HEK293 (cell line): ENCODE measurements at regions of chr22 and their contacts with region 1.

Region 1: DNA sequence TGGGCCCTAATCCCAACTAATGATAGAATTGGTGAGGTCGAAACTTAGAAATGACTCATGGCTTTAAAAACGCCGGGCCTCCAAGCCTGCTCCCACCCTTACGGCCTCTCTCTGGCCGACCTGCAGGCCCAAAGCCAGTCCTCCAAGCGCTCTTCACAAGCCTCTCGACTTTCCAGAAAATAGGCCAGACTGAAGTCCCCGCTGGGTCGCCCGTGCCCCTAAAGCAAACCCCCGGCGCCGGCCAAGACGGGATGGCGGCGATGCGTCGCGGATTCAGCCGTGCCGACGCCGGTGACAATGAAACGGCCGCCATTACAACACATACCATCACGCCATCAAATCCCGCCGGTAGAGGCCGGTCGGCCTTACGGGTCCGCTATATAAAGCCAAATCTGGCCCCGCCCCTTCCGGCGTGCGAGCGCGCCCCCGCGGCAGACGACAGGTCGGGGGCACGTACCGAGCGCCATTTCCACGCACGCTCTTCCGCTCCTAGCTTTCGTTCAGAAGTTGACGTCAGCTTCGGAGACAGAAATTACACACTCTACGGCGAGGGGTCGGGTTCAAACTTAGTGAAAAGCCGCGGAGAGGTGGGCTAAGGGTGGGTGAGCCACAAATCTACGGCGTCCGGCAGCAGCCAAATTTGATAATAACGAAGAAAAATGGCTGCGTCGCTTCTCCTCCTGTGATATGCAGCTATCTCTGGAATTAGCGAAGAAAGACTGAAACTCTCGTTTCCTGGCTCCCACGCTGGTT is at the start of gene RPL3:
- H3K4me3 ChIP-seq: peak within 1 kb of the TSS; percentile 73
- H3K27ac ChIP-seq: peak within 1 kb of the TSS; percentile 99
- H3K4me1 ChIP-seq: 0 out of 2 replicates have a peak, but pooled peaks cover 4% of the 10 kb centered on the region
- CTCF ChIP-seq: peak; percentile 86

Region 2: GRCh38 chr22:39135090-39135896 is 184.2 kb before region 1 on chr22:
- CTCF ChIA-PET with region 1: interaction called, 17 read pairs
- POLR2A ChIA-PET with region 1: interaction called, 9 read pairs
- H3K4me3 ChIP-seq: no peak overlapping the region
- H3K27ac ChIP-seq: no peak overlapping the region
- H3K4me1 ChIP-seq: no peaks in the 10 kb centered on the region
- CTCF ChIP-seq: peak; percentile 51

Region 3: DNA sequence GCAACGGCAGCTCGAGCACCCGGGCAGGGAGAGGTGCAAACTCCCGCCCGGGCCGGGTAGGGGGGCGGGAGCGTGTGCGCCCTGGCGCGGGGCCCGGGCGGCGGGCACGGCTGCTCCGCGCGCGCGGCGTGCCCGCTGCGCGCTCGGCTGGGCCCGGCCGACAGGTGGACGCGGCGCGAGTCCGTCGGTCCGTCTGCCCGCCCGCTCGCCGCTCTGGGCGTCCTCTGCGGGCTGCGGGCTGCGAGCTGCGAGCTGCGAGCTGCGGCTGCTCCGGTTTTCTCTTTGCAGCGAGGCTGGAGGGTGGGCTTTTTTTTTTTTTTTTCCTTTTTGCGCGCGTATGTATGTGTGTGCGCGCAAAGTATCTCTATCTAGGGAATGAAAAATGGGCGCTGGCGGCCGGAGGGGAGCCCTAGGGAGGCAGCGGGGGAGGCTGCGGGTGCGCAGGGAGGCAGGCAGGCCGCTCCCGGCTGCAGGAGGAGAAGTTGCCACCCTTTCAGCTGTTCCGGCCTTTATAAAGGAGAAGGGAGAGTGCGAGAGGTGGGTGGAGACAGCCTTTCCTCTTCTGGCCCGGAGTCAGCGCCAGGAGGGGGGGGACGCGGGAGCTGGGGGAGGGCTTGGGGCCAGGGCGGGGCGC is 74.8 kb before region 1 on chr22 and contains the start of gene PDGFB:
- CTCF ChIA-PET with region 1: interaction called, 5 read pairs
- POLR2A ChIA-PET with region 1: interaction called, 26 read pairs
- H3K4me3 ChIP-seq: peak within 1 kb of the TSS; percentile 54
- H3K27ac ChIP-seq: peak within 1 kb of the TSS; percentile 17; the same call in 1 of the 2 replicates
- H3K4me1 ChIP-seq: peaks cover 17% of the 10 kb centered on the region
- CTCF ChIP-seq: no peak

Region 4: GRCh38 chr22:39300186-39300830 is 19.1 kb before region 1 on chr22:
- CTCF ChIA-PET with region 1: interaction called, 15 read pairs
- POLR2A ChIA-PET with region 1: interaction called, 43 read pairs
- H3K4me3 ChIP-seq: no peak overlapping the region
- H3K27ac ChIP-seq: no peak overlapping the region
- H3K4me1 ChIP-seq: no peaks in the 10 kb centered on the region
- CTCF ChIP-seq: no peak

Region 5: GRCh38 chr22:39343259-39344048 is 24.0 kb after region 1 on chr22:
- CTCF ChIA-PET with region 1: interaction called, 9 read pairs
- POLR2A ChIA-PET with region 1: interaction called, 40 read pairs
- H3K4me3 ChIP-seq: no peak overlapping the region
- H3K27ac ChIP-seq: no peak overlapping the region
- H3K4me1 ChIP-seq: no peaks in the 10 kb centered on the region
- CTCF ChIP-seq: peak; percentile 63

Region 6: DNA sequence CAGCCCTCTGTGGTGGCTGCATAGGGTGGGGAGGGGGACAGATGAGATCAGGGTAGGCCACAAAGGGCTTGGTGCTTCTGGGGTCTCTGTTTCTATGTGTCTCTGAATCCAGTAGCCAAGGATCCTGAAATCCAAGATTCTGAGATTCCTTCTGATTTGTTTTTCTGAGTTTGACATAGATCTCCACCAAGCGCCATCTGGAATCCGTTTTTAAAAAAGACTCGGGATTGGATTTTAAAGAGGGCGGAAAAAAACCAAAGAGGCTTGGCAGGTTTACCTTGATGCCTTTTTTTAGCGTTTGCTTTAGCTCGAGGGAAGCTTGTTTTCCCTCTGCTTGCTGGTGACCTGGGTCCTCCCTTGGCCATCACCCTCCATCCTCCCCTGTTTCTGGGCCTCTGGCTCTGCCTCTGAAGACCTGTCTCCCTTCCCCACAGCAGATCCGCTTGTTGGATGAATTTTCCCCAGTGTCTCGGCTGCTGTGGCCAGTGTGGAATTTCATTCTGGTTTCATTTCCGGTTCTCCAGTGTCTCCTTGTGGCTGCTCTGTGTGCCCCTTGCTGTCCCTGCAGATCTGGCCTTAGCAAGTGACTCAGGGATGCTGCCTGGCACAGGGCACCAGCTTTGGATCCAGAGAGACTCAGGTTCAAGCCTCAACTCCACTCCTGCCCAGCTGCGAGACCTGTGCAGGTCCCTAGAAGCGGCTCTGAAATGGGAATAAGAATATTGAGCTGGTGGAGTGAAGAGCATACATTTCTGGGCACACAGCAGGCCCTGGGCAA is 45.5 kb after region 1 on chr22:
- CTCF ChIA-PET with region 1: interaction called, 3 read pairs
- POLR2A ChIA-PET with region 1: interaction called, 16 read pairs
- H3K4me3 ChIP-seq: no peak overlapping the region
- H3K27ac ChIP-seq: no peak overlapping the region
- H3K4me1 ChIP-seq: no peaks in the 10 kb centered on the region; the same call in 1 of the 2 replicates
- CTCF ChIP-seq: no peak

Region 7: GRCh38 chr22:39520054-39520891 is 200.8 kb after region 1 on chr22 and contains the start of gene ATF4:
- CTCF ChIA-PET with region 1: interaction called, 6 read pairs
- POLR2A ChIA-PET with region 1: interaction called, 62 read pairs
- H3K4me3 ChIP-seq: peak within 1 kb of the TSS; percentile 95
- H3K27ac ChIP-seq: peak within 1 kb of the TSS; percentile 95
- H3K4me1 ChIP-seq: 0 out of 2 replicates have a peak, but pooled peaks cover 5% of the 10 kb centered on the region
- CTCF ChIP-seq: 0 out of 2 replicates have a peak, but pooled peaks have one; percentile 11